ENCODE measurements at regions of chr2 and their contacts with region 1.

Region 1: GRCh38 chr2:136117909-136118818 is at the start of gene CXCR4:
- DNase-seq: peak; percentile 97
- H3K4me3 Mint-ChIP-seq: peak within 1 kb of the TSS; percentile 98
- H3K27ac Mint-ChIP-seq: peak within 1 kb of the TSS; percentile 95
- H3K4me1 Mint-ChIP-seq: peaks cover 63% of the 10 kb centered on the region
- H3K27me3 Mint-ChIP-seq: peaks cover 35% of the 10 kb centered on the region
- total RNA-seq, gene CXCR4: 88.8 and 92.7 TPM in 2 replicates

Region 2: GRCh38 chr2:135531231-135532228 is 586.6 kb before region 1 on chr2 and contains the start of gene R3HDM1:
- intact Hi-C with region 1: loop called (anchors 5 kb)
- DNase-seq: peak; percentile 97
- H3K4me3 Mint-ChIP-seq: no peak within 1 kb of the TSS
- H3K27ac Mint-ChIP-seq: no peak within 1 kb of the TSS
- H3K4me1 Mint-ChIP-seq: peaks cover 29% of the 10 kb centered on the region
- H3K27me3 Mint-ChIP-seq: no peaks in the 10 kb centered on the region
- total RNA-seq, gene R3HDM1: 65.8 and 78.3 TPM in 2 replicates

Region 3: GRCh38 chr2:135664623-135665068 is 453.5 kb before region 1 on chr2:
- intact Hi-C with region 1: no loop called
- DNase-seq: no peak
- H3K4me3 Mint-ChIP-seq: no peak overlapping the region
- H3K27ac Mint-ChIP-seq: peak overlapping the region; percentile 79
- H3K4me1 Mint-ChIP-seq: peaks cover 31% of the 10 kb centered on the region
- H3K27me3 Mint-ChIP-seq: no peaks in the 10 kb centered on the region

Region 4: DNA sequence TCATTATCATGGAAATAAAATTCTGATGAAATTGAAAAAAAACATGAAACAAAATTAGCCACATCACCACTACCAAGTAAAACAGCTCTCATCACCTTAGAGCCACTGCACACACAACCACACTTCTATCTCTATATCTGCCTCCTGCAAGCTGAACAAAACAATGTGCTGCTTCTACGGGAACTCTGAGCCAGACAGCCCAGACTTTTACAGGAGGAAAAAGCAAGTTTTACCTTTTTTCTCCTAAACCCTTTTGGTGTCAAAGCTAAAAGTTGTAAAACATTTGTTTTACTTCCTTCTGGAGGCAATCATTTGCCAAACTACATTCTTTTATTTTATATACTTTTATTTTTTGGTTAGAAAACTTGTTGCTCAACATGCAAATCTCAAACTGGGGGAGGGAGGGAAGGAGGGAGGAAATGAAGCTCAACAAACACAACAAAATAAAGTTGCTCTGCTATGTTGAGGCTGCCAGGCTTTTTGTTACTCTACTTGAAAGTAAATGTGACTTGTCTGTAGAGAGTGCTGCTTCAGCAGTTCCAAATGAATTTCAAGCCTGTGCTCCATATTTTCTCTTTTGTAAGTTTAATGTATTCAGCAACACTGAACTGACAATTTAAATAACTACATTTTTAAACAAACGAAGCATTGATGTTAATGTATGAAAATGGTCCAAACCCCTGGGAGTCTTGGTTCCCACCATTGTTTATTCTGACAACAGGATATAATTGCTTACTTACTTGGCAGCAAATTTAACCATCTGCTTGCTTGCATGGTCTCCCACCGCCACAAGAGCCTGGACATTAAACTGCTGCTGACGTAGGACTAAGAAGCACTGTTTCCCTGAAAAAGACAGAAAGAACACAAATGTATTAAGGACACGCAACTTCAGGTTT is 157.3 kb before region 1 on chr2:
- intact Hi-C with region 1: loop called (anchors 2 kb)
- DNase-seq: peak; percentile 83
- H3K4me3 Mint-ChIP-seq: peak overlapping the region; percentile 58
- H3K27ac Mint-ChIP-seq: peak overlapping the region; percentile 94
- H3K4me1 Mint-ChIP-seq: peaks cover 56% of the 10 kb centered on the region
- H3K27me3 Mint-ChIP-seq: no peaks in the 10 kb centered on the region

Region 5: GRCh38 chr2:136131961-136132824 is 14.0 kb after region 1 on chr2:
- intact Hi-C with region 1: loop called (anchors 1 kb)
- DNase-seq: peak; percentile 91
- H3K4me3 Mint-ChIP-seq: peak overlapping the region; percentile 76
- H3K27ac Mint-ChIP-seq: peak overlapping the region; percentile 81
- H3K4me1 Mint-ChIP-seq: peaks cover 88% of the 10 kb centered on the region
- H3K27me3 Mint-ChIP-seq: peaks cover 23% of the 10 kb centered on the region

Region 6: GRCh38 chr2:136305517-136306192 is 187.5 kb after region 1 on chr2:
- intact Hi-C with region 1: loop called (anchors 2 kb)
- DNase-seq: peak; percentile 78
- H3K4me3 Mint-ChIP-seq: no peak overlapping the region
- H3K27ac Mint-ChIP-seq: peak overlapping the region; percentile 82
- H3K4me1 Mint-ChIP-seq: peaks cover 22% of the 10 kb centered on the region
- H3K27me3 Mint-ChIP-seq: no peaks in the 10 kb centered on the region

Region 7: GRCh38 chr2:136378712-136379595 is 260.8 kb after region 1 on chr2:
- intact Hi-C with region 1: loop called (anchors 1 kb)
- DNase-seq: peak; percentile 93
- H3K4me3 Mint-ChIP-seq: no peak overlapping the region
- H3K27ac Mint-ChIP-seq: no peak overlapping the region
- H3K4me1 Mint-ChIP-seq: peaks cover 86% of the 10 kb centered on the region
- H3K27me3 Mint-ChIP-seq: no peaks in the 10 kb centered on the region

Region 8: GRCh38 chr2:136932700-136933099 is 814.5 kb after region 1 on chr2:
- intact Hi-C with region 1: no loop called
- DNase-seq: no peak
- H3K4me3 Mint-ChIP-seq: no peak overlapping the region
- H3K27ac Mint-ChIP-seq: no peak overlapping the region
- H3K4me1 Mint-ChIP-seq: no peaks in the 10 kb centered on the region
- H3K27me3 Mint-ChIP-seq: no peaks in the 10 kb centered on the region

Measured in activated CD4-positive, alpha-beta T cell treated with anti-CD3 and anti-CD28 coated beads, Interleukin-2, amount 10 ng/mL, durations not matched to agents 24 days and 14 days (primary cell).